ENCODE measurements at regions of chr17 and their contacts with region 1.

Region 1: DNA sequence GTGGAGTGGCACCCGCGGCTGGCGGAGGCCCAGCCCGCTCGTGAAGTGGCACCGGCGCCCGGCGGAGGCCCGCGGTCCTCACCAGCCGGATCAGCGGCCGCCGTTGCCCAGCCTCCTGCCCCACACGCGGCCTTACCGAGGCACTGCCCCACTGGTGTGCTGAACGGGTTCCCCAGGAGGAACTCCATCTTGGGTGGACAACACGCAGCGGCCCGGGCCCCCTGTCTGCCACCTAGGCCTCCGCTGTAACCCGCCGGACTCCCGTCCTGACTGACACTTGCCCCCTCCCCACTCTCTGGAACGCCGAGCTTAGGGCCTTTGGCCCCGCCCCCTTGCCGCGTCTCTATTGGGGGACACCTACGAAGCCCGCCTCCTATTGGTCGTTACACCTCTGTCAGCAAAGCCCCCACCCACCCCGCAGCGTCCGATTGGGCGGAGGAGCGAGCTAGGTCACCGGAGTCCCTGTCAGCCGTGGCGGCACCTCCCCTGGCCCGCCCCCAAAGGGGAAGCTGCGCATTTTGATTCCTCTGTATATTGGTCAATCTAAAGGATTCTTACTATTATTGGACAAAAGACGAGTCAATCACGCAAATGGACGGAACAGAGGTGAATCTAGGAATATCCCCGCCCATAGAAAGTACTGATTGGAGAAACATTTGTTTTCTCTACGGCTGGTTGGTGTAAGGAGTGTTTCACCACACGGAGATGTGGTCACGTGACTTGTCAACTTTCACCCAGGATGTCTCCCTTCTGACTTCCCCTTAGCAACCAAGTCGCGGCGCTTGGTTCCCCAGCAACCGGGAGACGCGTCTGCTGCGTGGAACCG is at the starts of genes DRC3 and TOM1L2:
- DNase-seq: peak; percentile 96 to 100 (median 100)
- ATAC-seq: peak; percentile 95
- H3K4me3 ChIP-seq: peak within 1 kb of the TSS; percentile 70
- H3K4me3 Mint-ChIP-seq: peak within 1 kb of the TSS; percentile 93 to 98 (median 97)
- H3K27ac ChIP-seq: peak within 1 kb of the TSS; percentile 85
- H3K27ac Mint-ChIP-seq: peak within 1 kb of the TSS; percentile 89 to 98 (median 95)
- H3K4me1 ChIP-seq: peaks cover 14 to 26% of the 10 kb centered on the region in 2 donors
- H3K4me1 Mint-ChIP-seq: peaks cover 30 to 57% (median 45%) of the 10 kb centered on the region in 7 donors
- H3K27me3 ChIP-seq: no peaks in the 10 kb centered on the region
- H3K27me3 Mint-ChIP-seq: no peaks in the 10 kb centered on the region
- total RNA-seq, gene DRC3: 1.00 to 2.4 TPM in 2 of 5 experiments, not detected in the others
- total RNA-seq, gene TOM1L2: 35.1 to 84.1 (median 63.4) TPM

Region 2: DNA sequence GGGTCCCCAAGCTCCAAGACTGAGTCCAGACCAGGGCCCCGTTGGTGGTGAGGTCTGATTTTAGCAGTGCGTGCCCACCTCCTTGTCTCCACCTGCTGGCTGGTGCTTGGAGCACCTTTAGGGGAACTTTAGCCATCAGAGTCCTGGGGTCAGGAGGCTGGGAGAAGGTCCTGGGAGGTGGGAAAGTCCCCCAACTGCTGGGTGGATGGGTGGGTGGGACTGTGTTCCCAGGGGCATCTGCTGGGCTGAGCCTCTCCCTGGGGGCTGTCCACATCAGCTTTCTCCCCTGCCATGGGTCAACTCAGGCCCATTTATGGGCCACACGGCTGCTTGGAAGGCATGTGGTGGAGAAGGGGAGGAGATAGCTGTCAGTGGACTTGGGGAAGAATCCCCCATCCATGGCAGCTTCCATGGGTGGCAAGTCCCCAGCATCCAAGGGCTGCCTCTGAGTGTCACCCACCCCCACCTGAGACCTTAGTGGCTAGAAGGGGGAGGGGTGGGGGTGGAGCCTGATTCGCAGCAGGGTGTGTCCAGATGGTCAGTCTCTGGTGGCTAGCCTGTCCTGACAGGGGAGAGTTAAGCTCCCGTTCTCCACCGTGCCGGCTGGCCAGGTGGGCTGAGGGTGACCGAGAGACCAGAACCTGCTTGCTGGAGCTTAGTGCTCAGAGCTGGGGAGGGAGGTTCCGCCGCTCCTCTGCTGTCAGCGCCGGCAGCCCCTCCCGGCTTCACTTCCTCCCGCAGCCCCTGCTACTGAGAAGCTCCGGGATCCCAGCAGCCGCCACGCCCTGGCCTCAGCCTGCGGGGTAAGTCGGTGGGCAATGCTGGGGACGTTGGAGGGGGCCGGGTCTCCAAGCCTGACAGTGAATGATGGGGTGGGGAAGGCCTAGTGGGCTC is 1557.1 kb before region 1 on chr17 and contains the start of gene TRPV2:
- CTCF ChIA-PET with region 1: no interaction called
- POLR2A ChIA-PET with region 1: no interaction called
- intact Hi-C with region 1: loop called in 1 of 2 experiments (anchors 5 kb)
- DNase-seq: peak in 8 of 9 donors; percentile 36 to 58 (median 47)
- ATAC-seq: peak; percentile 57
- H3K4me3 ChIP-seq: peak within 1 kb of the TSS; percentile 93
- H3K4me3 Mint-ChIP-seq: peak within 1 kb of the TSS; percentile 90 to 100 (median 98)
- H3K27ac ChIP-seq: peak within 1 kb of the TSS; percentile 94
- H3K27ac Mint-ChIP-seq: peak within 1 kb of the TSS; percentile 96 to 100 (median 98)
- H3K4me1 ChIP-seq: peaks cover 37 to 47% of the 10 kb centered on the region in 2 donors
- H3K4me1 Mint-ChIP-seq: peaks cover 33 to 55% (median 42%) of the 10 kb centered on the region in 7 donors
- H3K27me3 ChIP-seq: no peaks in the 10 kb centered on the region
- H3K27me3 Mint-ChIP-seq: no peaks in the 10 kb centered on the region
- total RNA-seq, gene TRPV2: 66.8 to 141 (median 80.0) TPM

Region 3: DNA sequence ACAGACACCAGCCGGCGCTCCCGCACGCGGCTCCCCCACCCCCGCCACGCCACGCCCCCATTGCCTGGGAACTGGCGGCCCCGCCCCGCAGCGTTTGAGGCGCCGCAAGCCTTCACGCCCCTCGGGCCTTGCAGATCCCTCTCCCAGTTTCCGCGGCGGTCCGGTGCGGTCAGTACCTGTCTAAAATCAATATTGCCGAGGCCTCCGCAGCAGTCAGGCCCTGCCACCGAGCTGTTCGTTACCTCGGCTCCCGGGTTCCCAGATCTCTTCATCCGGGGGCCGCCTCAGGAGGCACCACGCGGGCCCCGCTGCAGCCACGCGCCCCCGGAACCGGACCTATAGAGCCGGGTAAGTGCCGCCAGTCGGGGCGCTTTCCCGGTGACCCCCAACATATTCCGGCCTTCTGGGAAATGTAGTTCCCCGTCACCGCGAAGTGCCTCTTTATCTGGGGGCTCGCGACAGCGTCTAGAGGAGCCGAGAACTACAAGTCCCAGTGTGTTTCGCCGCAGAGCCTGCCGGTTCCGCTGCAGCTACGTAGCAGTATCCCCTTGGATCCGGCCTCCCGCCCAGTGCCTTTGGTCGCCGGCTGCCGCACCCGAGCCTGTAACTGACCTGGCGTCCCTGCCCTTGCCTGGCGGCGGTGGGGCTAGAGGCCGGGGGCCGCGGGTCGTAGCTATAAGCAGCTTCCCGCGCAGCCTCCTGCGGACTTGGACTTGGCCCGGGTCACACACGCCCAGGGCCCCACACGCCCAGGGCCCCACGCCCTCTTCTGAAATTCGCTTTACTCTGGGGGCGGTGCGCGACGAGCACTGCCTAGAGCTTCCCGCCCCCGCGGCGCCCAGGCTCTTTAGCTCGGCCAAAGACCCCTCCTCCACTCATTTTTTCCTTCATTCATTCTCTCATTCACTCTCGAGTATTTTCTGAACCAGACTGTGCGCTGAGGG is 380.7 kb before region 1 on chr17 and contains the start of gene PEMT:
- CTCF ChIA-PET with region 1: no interaction called
- POLR2A ChIA-PET with region 1: no interaction called
- intact Hi-C with region 1: loop called (anchors 1 kb)
- DNase-seq: peak; percentile 78 to 96 (median 93)
- ATAC-seq: peak; percentile 95
- H3K4me3 ChIP-seq: peak within 1 kb of the TSS; percentile 93
- H3K4me3 Mint-ChIP-seq: peak within 1 kb of the TSS; percentile 87 to 99 (median 93)
- H3K27ac ChIP-seq: peak within 1 kb of the TSS; percentile 79
- H3K27ac Mint-ChIP-seq: peak within 1 kb of the TSS; percentile 86 to 100 (median 93)
- H3K4me1 ChIP-seq: peaks cover 16 to 18% of the 10 kb centered on the region in 2 donors
- H3K4me1 Mint-ChIP-seq: peaks cover 14 to 32% (median 19%) of the 10 kb centered on the region in 7 donors
- H3K27me3 ChIP-seq: no peaks in the 10 kb centered on the region
- H3K27me3 Mint-ChIP-seq: no peaks in the 10 kb centered on the region
- total RNA-seq, gene PEMT: 9.5 to 15.0 (median 12.1) TPM

Region 4: GRCh38 chr17:17823433-17824118 is 148.8 kb before region 1 on chr17:
- CTCF ChIA-PET with region 1: interaction called, 3 read pairs
- POLR2A ChIA-PET with region 1: no interaction called
- intact Hi-C with region 1: loop called in 1 of 2 experiments (anchors 1 kb)
- DNase-seq: peak; percentile 71 to 84 (median 81)
- ATAC-seq: peak; percentile 93
- H3K4me3 ChIP-seq: peak overlapping the region; percentile 68
- H3K4me3 Mint-ChIP-seq: peak overlapping the region; percentile 78 to 86 (median 84)
- H3K27ac ChIP-seq: peak overlapping the region; percentile 74
- H3K27ac Mint-ChIP-seq: peak overlapping the region; percentile 78 to 96 (median 93)
- H3K4me1 ChIP-seq: peaks cover 41 to 81% of the 10 kb centered on the region in 2 donors
- H3K4me1 Mint-ChIP-seq: peaks cover 72 to 95% (median 87%) of the 10 kb centered on the region in 7 donors
- H3K27me3 ChIP-seq: no peaks in the 10 kb centered on the region
- H3K27me3 Mint-ChIP-seq: no peaks in the 10 kb centered on the region

Region 5: DNA sequence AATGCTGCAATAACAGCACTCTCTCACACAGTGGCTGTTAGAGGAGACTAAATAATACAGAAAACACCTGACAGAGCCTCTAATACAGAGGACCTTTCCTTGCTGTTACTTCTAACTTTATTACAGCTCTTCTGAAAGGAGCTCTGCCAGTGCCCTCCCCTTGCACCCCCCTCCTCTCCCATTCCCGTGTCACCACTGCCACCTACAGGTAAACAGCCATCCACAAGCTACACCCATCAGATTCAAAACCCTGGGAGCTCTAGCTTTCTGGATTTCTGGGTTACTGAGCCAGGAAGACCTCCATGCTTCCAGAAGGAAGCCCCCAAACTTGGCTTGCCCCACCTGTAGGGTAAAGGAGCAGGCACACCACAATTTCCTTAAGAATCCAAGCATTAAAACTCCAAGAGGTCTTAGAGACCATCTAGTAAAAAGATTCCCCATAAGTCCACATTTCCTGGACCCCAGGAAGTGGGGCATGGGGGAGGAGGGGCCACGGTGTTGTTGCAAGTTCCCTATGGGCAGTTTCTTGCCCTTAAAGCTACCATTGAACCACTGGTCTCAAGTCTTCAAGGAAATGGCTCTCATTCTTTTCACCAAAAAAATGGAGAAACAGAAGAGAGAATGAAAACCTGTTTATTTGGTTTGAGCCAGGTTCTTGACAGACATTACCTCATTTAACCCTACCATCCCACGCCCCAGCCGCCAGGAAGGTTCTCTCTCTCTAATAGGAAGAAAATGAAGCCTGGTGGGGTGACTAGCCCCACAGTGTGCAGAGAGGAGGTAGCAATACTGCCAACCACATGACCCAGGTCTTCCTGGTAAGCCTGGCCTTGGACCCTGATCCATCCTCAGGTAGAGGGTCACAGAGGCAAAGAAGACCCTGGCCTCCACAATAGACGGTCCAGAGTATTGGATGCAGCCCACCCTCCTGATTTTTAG is 52.9 kb before region 1 on chr17:
- CTCF ChIA-PET with region 1: interaction called, 3 read pairs
- POLR2A ChIA-PET with region 1: interaction called, 8 read pairs
- intact Hi-C with region 1: loop called (anchors 5 to 10 kb)
- DNase-seq: peak; percentile 18 to 77 (median 67)
- ATAC-seq: peak; percentile 90
- H3K4me3 ChIP-seq: no peak overlapping the region
- H3K4me3 Mint-ChIP-seq: no peak overlapping the region
- H3K27ac ChIP-seq: no peak overlapping the region
- H3K27ac Mint-ChIP-seq: peak overlapping the region in 5 of 9 donors; percentile 17 to 49 (median 34)
- H3K4me1 ChIP-seq: peaks cover 0 to 6% of the 10 kb centered on the region in 2 donors
- H3K4me1 Mint-ChIP-seq: peaks cover 21 to 34% (median 26%) of the 10 kb centered on the region in 7 donors
- H3K27me3 ChIP-seq: no peaks in the 10 kb centered on the region
- H3K27me3 Mint-ChIP-seq: no peaks in the 10 kb centered on the region

Region 6: DNA sequence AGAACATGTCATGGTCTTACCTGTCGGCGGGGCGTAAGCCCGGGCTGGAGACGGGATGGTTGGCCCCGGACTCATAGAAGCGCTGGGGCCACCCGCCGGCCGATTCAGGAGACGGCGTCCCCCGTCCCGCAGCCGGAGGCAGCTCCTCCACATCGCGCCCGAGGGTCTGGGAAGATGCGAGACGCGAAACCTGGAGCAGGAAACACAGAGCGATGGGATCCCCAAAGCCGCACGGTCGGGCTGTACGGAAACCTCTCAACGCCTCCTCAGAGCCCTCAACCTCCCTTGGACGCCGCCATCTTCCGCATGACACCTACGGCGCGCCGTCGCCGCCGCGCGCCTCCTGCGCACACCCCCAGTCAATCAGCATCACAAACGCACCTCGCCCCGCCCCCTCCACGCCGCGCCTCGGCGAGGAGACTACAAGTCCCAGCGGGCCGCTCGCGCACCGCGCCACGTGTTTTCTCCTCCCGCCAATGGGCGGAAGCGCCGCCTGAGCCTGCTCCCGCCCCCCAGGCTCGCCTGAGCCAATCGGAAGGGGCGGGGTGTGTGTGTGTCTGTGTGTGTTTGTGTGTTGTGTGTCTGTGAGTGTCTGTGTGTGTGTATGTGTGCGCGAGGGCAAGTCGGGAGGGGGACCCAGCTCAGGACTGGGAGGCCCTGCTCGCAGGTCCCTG is 66.7 kb after region 1 on chr17 and contains the starts of genes ATPAF2 and GID4:
- CTCF ChIA-PET with region 1: interaction called, 3 read pairs
- POLR2A ChIA-PET with region 1: interaction called, 4 read pairs
- intact Hi-C with region 1: loop called (anchors 1 kb)
- DNase-seq: peak; percentile 99 to 100 (median 100)
- ATAC-seq: peak; percentile 96
- H3K4me3 ChIP-seq: peak within 1 kb of the TSS; percentile 79
- H3K4me3 Mint-ChIP-seq: peak within 1 kb of the TSS; percentile 88 to 100 (median 98)
- H3K27ac ChIP-seq: peak within 1 kb of the TSS; percentile 88
- H3K27ac Mint-ChIP-seq: peak within 1 kb of the TSS; percentile 87 to 99 (median 97)
- H3K4me1 ChIP-seq: peaks cover 23 to 30% of the 10 kb centered on the region in 2 donors
- H3K4me1 Mint-ChIP-seq: peaks cover 42 to 70% (median 53%) of the 10 kb centered on the region in 7 donors
- H3K27me3 ChIP-seq: no peaks in the 10 kb centered on the region
- H3K27me3 Mint-ChIP-seq: no peaks in the 10 kb centered on the region
- total RNA-seq, gene ATPAF2: 26.3 to 36.7 (median 32.5) TPM
- total RNA-seq, gene GID4: 6.0 to 11.4 (median 10.0) TPM

Region 7: GRCh38 chr17:18158022-18158600 is 185.8 kb after region 1 on chr17:
- CTCF ChIA-PET with region 1: no interaction called
- POLR2A ChIA-PET with region 1: no interaction called
- intact Hi-C with region 1: no loop called
- DNase-seq: peak; percentile 89 to 94 (median 93)
- ATAC-seq: peak; percentile 96
- H3K4me3 ChIP-seq: peak overlapping the region; percentile 78
- H3K4me3 Mint-ChIP-seq: peak overlapping the region; percentile 78 to 93 (median 85)
- H3K27ac ChIP-seq: peak overlapping the region; percentile 64
- H3K27ac Mint-ChIP-seq: peak overlapping the region; percentile 89 to 94 (median 91)
- H3K4me1 ChIP-seq: peaks cover 6 to 7% of the 10 kb centered on the region in 2 donors
- H3K4me1 Mint-ChIP-seq: peaks cover 0 to 19% (median 14%) of the 10 kb centered on the region in 7 donors
- H3K27me3 ChIP-seq: no peaks in the 10 kb centered on the region
- H3K27me3 Mint-ChIP-seq: peaks cover 0 to 2% (median 0%) of the 10 kb centered on the region in 5 donors

Region 8: GRCh38 chr17:18235743-18236256 is 263.5 kb after region 1 on chr17:
- CTCF ChIA-PET with region 1: no interaction called
- POLR2A ChIA-PET with region 1: no interaction called
- intact Hi-C with region 1: no loop called
- DNase-seq: peak in 1 of 9 donors; percentile 40
- ATAC-seq: no peak
- H3K4me3 ChIP-seq: no peak overlapping the region
- H3K4me3 Mint-ChIP-seq: no peak overlapping the region
- H3K27ac ChIP-seq: no peak overlapping the region
- H3K27ac Mint-ChIP-seq: no peak overlapping the region
- H3K4me1 ChIP-seq: no peaks in the 10 kb centered on the region
- H3K4me1 Mint-ChIP-seq: peaks cover 0 to 4% (median 0%) of the 10 kb centered on the region in 7 donors
- H3K27me3 ChIP-seq: no peaks in the 10 kb centered on the region
- H3K27me3 Mint-ChIP-seq: no peaks in the 10 kb centered on the region

Region 9: GRCh38 chr17:18314731-18315561 is 342.6 kb after region 1 on chr17 and contains the starts of genes SMCR8 and TOP3A:
- CTCF ChIA-PET with region 1: no interaction called
- POLR2A ChIA-PET with region 1: no interaction called
- intact Hi-C with region 1: loop called in 1 of 2 experiments (anchors 2 kb)
- DNase-seq: peak; percentile 86 to 99 (median 98)
- ATAC-seq: peak; percentile 96
- H3K4me3 ChIP-seq: peak within 1 kb of the TSS; percentile 95
- H3K4me3 Mint-ChIP-seq: peak within 1 kb of the TSS; percentile 89 to 98 (median 93)
- H3K27ac ChIP-seq: peak within 1 kb of the TSS; percentile 93
- H3K27ac Mint-ChIP-seq: peak within 1 kb of the TSS; percentile 92 to 99 (median 95)
- H3K4me1 ChIP-seq: peaks cover 50 to 54% of the 10 kb centered on the region in 2 donors
- H3K4me1 Mint-ChIP-seq: peaks cover 61 to 88% (median 83%) of the 10 kb centered on the region in 7 donors
- H3K27me3 ChIP-seq: no peaks in the 10 kb centered on the region
- H3K27me3 Mint-ChIP-seq: peaks cover 0 to 2% (median 0%) of the 10 kb centered on the region in 5 donors
- total RNA-seq, gene SMCR8: 29.0 to 61.7 (median 52.1) TPM
- total RNA-seq, gene TOP3A: 39.0 to 74.9 (median 43.6) TPM